ENCODE measurements at regions of chrX and their contacts with region 1.

Region 1: GRCh38 chrX:2316534-2316933 is 184.2 kb downstream of the DHRSX start:
- DNase-seq: no peak
- ATAC-seq: no peak
- H3K4me3 ChIP-seq: no peak overlapping the region
- H3K27ac ChIP-seq: no peak overlapping the region
- H3K4me1 ChIP-seq: peaks cover 11 to 14% of the 10 kb centered on the region in 2 experiments; a peak in 3 of 5 replicates
- H3K27me3 ChIP-seq: no peaks in the 10 kb centered on the region
- CTCF ChIP-seq: no peak
- EP300 ChIP-seq: no peak
- POLR2A ChIP-seq: no peak
- RAD21 ChIP-seq: no peak

Region 2: GRCh38 chrX:1767025-1767424 is 549.5 kb before region 1 on chrX:
- CTCF ChIA-PET with region 1: no interaction called
- POLR2A ChIA-PET with region 1: no interaction called
- in situ Hi-C with region 1: no loop called
- intact Hi-C with region 1: no loop called
- DNase-seq: no peak
- ATAC-seq: no peak
- H3K4me3 ChIP-seq: no peak overlapping the region
- H3K27ac ChIP-seq: no peak overlapping the region
- H3K4me1 ChIP-seq: no peaks in the 10 kb centered on the region
- H3K27me3 ChIP-seq: no peaks in the 10 kb centered on the region; a peak in 1 of 5 replicates
- CTCF ChIP-seq: no peak
- EP300 ChIP-seq: no peak
- POLR2A ChIP-seq: no peak
- RAD21 ChIP-seq: no peak

Region 3: GRCh38 chrX:2231570-2232192 is 84.9 kb before region 1 on chrX:
- CTCF ChIA-PET with region 1: no interaction called
- POLR2A ChIA-PET with region 1: no interaction called
- in situ Hi-C with region 1: no loop called
- intact Hi-C with region 1: loop called (anchors 5 kb)
- DNase-seq: no peak
- ATAC-seq: no peak
- H3K4me3 ChIP-seq: no peak overlapping the region
- H3K27ac ChIP-seq: no peak overlapping the region
- H3K4me1 ChIP-seq: no peaks in the 10 kb centered on the region; a peak in 3 of 5 replicates
- H3K27me3 ChIP-seq: no peaks in the 10 kb centered on the region
- CTCF ChIP-seq: no peak
- EP300 ChIP-seq: no peak
- POLR2A ChIP-seq: no peak
- RAD21 ChIP-seq: no peak

Region 4: DNA sequence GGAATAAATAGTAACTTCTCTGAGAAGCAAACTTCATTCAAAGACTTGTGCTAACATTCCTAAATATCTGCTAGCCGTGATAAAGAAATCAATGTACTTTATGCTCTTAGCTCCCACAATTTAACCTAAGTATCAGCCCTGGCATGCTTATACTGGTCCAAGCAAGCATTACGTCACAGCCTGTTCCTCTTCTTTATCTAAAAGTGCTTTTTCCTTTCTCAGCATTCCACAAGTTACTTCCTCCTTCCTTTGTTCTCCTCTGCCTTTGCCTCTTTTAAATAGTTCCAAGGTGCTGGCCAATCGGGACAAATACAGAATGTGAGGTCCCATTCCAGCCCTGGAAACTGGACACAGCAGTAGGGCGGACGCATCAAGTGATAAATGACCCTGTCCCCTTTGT is 65.3 kb before region 1 on chrX:
- CTCF ChIA-PET with region 1: no interaction called
- POLR2A ChIA-PET with region 1: no interaction called
- in situ Hi-C with region 1: no loop called
- intact Hi-C with region 1: loop called (anchors 5 kb)
- DNase-seq: no peak
- ATAC-seq: no peak
- H3K4me3 ChIP-seq: no peak overlapping the region
- H3K27ac ChIP-seq: no peak overlapping the region
- H3K4me1 ChIP-seq: peaks cover 6% of the 10 kb centered on the region in 2 experiments; a peak in 3 of 5 replicates
- H3K27me3 ChIP-seq: no peaks in the 10 kb centered on the region
- CTCF ChIP-seq: no peak
- EP300 ChIP-seq: no peak
- POLR2A ChIP-seq: no peak
- RAD21 ChIP-seq: no peak

Region 5: GRCh38 chrX:2451501-2452316 is 135.2 kb after region 1 on chrX:
- CTCF ChIA-PET with region 1: no interaction called
- POLR2A ChIA-PET with region 1: no interaction called
- in situ Hi-C with region 1: no loop called
- intact Hi-C with region 1: loop called (anchors 2 kb)
- DNase-seq: peak; percentile 20 to 85 (median 35)
- ATAC-seq: peak; percentile 85
- H3K4me3 ChIP-seq: peak overlapping the region; percentile 23
- H3K27ac ChIP-seq: peak overlapping the region; percentile 92
- H3K4me1 ChIP-seq: no peaks in the 10 kb centered on the region; a peak in 3 of 5 replicates
- H3K27me3 ChIP-seq: no peaks in the 10 kb centered on the region
- CTCF ChIP-seq: no peak
- EP300 ChIP-seq: no peak
- POLR2A ChIP-seq: no peak
- RAD21 ChIP-seq: peak in 1 of 2 experiments; percentile 41; a peak in 2 of 4 replicates

Measured in K562 (cell line).